HEK293T (cell line): ENCODE measurements at regions of chr1 and their contacts with region 1.

Region 1: GRCh38 chr1:236361909-236362590 is 32.0 kb upstream of the EDARADD start:
- DNase-seq: no peak

Region 2: GRCh38 chr1:236303687-236304086 is 58.4 kb before region 1 on chr1:
- CTCF ChIA-PET with region 1: interaction called, 10 read pairs
- POLR2A ChIA-PET with region 1: no interaction called
- DNase-seq: no peak